ENCODE measurements at regions of chr14 and their contacts with region 1.

Region 1: DNA sequence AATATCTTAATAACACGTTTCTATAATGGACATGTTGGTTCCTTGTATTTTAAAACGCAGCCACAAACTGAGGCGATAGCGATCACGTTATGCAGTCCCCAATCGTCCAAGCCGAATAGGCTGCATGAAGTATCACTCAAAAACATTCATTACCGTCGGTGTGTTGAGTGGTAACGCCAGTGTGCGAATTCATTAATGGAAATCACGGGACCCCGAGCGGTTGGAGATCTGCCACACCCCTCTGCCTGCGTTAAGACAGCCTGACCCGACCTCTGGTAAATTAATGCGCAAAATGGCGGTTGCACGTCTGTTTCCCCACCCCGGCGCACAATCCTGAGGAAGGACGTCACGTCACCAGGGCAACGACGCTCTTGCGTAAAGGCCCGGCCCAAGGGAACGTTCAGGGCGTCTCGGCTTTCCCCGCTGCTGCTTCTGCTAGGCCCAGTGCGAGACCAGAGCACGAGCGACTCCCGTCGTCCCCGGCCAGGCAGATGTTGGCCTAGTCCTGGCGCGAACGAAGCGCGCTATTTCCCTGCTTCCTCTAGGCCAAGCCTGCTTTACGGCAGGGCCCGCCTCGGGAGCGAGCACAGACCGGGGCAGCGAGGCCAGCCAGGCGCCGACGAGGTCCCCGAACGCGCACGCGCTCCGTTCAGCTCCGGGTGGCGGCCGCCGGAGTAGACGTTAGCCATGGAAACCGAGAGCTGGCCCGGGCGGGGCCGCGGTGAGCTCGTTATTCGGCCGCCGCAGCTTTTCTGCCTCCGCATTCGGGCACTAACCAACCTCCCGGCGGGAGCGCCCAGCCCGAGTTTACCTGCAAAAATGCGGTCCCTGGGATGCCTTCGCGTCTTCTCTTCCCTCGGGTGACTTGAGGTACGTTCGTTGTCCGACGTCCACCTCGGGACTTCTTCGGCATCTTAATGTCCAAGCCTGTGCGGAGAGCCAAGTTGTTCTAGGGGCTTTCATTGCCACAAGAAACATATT is at the start of gene PCNX4:
- DNase-seq: peak; percentile 97
- H3K4me3 Mint-ChIP-seq: peak within 1 kb of the TSS; percentile 98
- H3K27ac Mint-ChIP-seq: peak within 1 kb of the TSS; percentile 98
- H3K4me1 Mint-ChIP-seq: peaks cover 35% of the 10 kb centered on the region
- H3K27me3 Mint-ChIP-seq: no peaks in the 10 kb centered on the region
- total RNA-seq, gene PCNX4: 39.8 and 45.5 TPM in 2 replicates

Region 2: GRCh38 chr14:59189786-59190771 is 901.8 kb before region 1 on chr14:
- intact Hi-C with region 1: loop called (anchors 2 kb)
- DNase-seq: peak; percentile 94
- H3K4me3 Mint-ChIP-seq: peak overlapping the region; percentile 98
- H3K27ac Mint-ChIP-seq: peak overlapping the region; percentile 73
- H3K4me1 Mint-ChIP-seq: peaks cover 16% of the 10 kb centered on the region
- H3K27me3 Mint-ChIP-seq: peaks cover 19% of the 10 kb centered on the region

Region 3: DNA sequence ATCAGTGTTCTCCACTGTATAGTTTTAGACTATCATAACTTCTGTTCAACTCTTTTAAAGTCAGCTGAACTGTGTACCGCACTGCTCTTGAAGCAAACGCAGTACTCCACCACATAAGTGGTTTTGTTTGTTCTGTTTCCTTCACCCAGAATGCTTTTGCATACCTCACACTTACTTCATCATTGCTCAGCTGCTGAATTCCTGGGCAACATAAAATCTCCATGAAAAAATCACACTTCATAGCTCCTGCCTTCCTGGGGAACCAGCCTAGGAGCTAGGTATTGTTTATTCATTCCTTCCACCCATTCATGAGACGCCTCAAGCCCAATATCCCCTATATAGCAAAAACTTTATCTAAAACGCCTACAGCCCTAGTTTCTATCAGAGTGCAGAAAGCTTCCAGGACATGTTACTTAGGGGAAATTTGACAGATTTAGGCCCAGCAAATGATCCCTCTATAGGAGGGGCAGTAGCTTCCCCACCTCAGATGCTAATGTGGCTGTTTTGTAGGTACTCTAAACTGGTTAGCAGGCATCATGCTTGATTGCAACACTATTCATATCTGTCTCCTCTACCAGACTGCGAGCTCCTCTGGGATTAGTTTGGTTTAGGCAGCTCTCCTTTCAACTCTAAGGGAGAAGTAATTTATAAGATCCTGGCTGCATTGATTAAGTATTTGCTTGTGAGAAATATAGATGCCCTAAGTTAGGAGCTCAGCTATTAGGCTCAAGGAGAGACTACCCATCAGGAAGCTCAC is 127.4 kb before region 1 on chr14:
- intact Hi-C with region 1: loop called (anchors 2 kb)
- DNase-seq: no peak
- H3K4me3 Mint-ChIP-seq: peak overlapping the region; percentile 78
- H3K27ac Mint-ChIP-seq: no peak overlapping the region
- H3K4me1 Mint-ChIP-seq: peaks cover 12% of the 10 kb centered on the region
- H3K27me3 Mint-ChIP-seq: peaks cover 7% of the 10 kb centered on the region

Region 4: GRCh38 chr14:60151715-60152114 is 59.9 kb after region 1 on chr14:
- intact Hi-C with region 1: loop called (anchors 1 kb)
- DNase-seq: peak; percentile 88
- H3K4me3 Mint-ChIP-seq: peak overlapping the region; percentile 31
- H3K27ac Mint-ChIP-seq: peak overlapping the region; percentile 90
- H3K4me1 Mint-ChIP-seq: peaks cover 30% of the 10 kb centered on the region
- H3K27me3 Mint-ChIP-seq: no peaks in the 10 kb centered on the region

Region 5: DNA sequence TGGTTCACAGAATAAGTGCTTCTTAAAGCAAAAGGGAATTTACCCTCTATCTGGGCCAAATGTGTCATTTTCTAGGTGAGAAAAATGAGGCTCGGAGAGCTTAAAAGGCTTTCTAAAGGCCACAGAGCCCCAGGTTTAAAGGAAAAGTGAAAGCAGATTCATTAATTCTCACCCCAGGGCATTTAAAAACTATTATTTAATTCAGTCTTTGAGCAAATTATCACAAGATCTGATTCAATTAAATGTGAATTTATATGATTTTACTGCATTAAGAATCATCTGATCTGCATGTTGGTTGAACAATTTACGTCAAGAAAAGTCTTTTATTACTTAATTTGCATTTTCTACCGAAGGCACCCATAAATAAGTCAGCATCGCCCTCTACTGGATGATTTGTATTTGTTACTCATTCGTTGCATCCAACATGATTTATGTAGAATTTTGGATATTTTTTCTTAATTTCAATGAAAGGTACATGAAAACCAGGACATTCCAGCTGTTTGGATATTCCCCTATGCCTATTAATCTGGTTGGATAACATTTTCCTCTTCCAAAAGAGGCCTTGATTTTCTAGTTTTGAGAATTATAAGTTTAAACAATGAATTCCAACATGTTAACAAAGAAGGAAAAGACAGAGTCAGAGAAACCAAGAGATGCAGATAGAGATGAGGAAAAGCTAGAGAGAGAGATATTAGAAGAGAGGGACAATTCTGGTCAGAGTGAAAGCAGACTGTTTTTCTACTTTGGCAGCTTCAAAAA is 92.5 kb after region 1 on chr14:
- intact Hi-C with region 1: loop called (anchors 1 kb)
- DNase-seq: peak; percentile 82
- H3K4me3 Mint-ChIP-seq: peak overlapping the region; percentile 77
- H3K27ac Mint-ChIP-seq: peak overlapping the region; percentile 75
- H3K4me1 Mint-ChIP-seq: peaks cover 11% of the 10 kb centered on the region
- H3K27me3 Mint-ChIP-seq: no peaks in the 10 kb centered on the region

Region 6: GRCh38 chr14:60331201-60332045 is 239.6 kb after region 1 on chr14:
- intact Hi-C with region 1: loop called (anchors 5 kb)
- DNase-seq: peak; percentile 92
- H3K4me3 Mint-ChIP-seq: peak overlapping the region; percentile 97
- H3K27ac Mint-ChIP-seq: peak overlapping the region; percentile 95
- H3K4me1 Mint-ChIP-seq: peaks cover 32% of the 10 kb centered on the region
- H3K27me3 Mint-ChIP-seq: peaks cover 42% of the 10 kb centered on the region